CD8-positive, alpha-beta T cell (primary cell): ENCODE measurements at regions of chr10 and their contacts with region 1.

Region 1: DNA sequence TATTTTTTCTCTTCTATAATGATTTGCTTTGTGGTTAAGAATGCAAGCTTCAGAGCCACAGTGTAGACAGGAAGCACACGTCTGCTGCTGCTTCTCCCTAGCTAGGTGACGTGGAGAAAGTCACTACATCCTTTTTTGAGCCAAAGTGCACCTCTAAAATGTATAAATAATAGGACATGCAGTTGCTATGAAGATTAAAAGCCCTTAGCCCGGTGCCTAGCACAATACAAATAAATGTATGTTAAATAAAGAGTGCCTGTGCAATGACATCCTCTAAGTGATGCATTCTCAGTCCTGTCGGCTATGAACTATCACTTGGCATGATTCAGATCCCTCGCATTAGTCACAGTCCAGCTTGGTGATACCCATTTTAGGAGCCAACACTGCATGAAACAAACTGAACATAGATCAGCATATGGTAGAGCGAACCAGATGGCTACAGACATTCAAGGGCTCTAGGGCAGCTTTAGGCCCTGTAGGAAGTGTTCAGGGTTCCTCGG is 4.8 kb upstream of the TRDMT1 start:
- DNase-seq: peak in 6 of 9 experiments; percentile 11 to 85 (median 64)
- ATAC-seq: peak; percentile 70
- H3K4me3 ChIP-seq: no peak overlapping the region
- H3K4me3 Mint-ChIP-seq: peak overlapping the region; percentile 1
- H3K27ac ChIP-seq: peak overlapping the region; percentile 66 to 74
- H3K27ac Mint-ChIP-seq: peak overlapping the region; percentile 88
- H3K4me1 ChIP-seq: peaks cover 23% of the 10 kb centered on the region
- H3K4me1 Mint-ChIP-seq: peaks cover 25% of the 10 kb centered on the region
- H3K27me3 ChIP-seq: no peaks in the 10 kb centered on the region
- H3K27me3 Mint-ChIP-seq: no peaks in the 10 kb centered on the region
- CTCF ChIP-seq: no peak

Region 2: DNA sequence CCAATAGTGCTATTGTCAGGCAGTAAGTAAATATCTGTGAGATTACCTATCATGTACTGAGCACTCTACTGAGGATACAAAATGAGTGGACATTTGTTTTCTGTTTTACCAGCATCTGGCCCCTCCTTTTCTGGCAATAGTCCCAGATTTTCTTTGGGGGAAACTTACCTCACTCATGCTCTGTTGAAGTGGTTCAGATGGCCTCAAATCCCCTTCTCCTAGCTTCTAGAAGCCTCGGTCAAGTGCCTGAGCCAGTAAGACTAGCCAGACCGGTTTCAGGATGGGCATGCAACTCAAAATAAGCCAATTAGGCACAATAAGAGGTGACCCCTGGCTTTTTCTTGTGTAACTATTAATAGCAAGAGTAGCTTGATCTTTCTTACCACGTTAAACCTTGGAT is 24.5 kb before region 1 on chr10:
- CTCF ChIA-PET with region 1: no interaction called
- POLR2A ChIA-PET with region 1: no interaction called
- intact Hi-C with region 1: no loop called
- DNase-seq: no peak
- ATAC-seq: no peak
- H3K4me3 ChIP-seq: no peak overlapping the region
- H3K4me3 Mint-ChIP-seq: no peak overlapping the region
- H3K27ac ChIP-seq: no peak overlapping the region
- H3K27ac Mint-ChIP-seq: peak overlapping the region; percentile 27
- H3K4me1 ChIP-seq: no peaks in the 10 kb centered on the region
- H3K4me1 Mint-ChIP-seq: peaks cover 4% of the 10 kb centered on the region
- H3K27me3 ChIP-seq: no peaks in the 10 kb centered on the region
- H3K27me3 Mint-ChIP-seq: no peaks in the 10 kb centered on the region
- CTCF ChIP-seq: no peak

Region 3: DNA sequence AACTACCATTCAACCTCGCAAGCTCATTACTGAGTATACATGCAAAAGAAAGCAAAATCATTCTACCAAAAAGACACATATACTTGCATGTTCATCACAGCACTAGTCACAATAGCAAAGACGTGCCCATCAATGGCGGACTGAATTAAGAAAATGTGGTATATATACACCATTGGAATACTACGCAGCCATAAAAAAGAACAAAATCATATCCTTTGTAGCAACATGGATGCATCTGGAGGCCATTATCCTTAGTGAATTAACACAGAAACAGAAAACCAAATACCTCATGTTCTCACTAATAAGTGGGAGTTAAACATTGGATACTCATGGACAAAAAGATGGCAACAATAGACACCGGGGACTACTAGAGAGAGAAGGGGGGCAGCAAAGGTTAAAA is 11.2 kb before region 1 on chr10:
- CTCF ChIA-PET with region 1: interaction called, 6 read pairs
- POLR2A ChIA-PET with region 1: interaction called, 4 read pairs
- intact Hi-C with region 1: loop called in 1 of 2 experiments (anchors 2 kb)
- DNase-seq: no peak
- ATAC-seq: no peak
- H3K4me3 ChIP-seq: no peak overlapping the region
- H3K4me3 Mint-ChIP-seq: no peak overlapping the region
- H3K27ac ChIP-seq: no peak overlapping the region
- H3K27ac Mint-ChIP-seq: no peak overlapping the region
- H3K4me1 ChIP-seq: peaks cover 2% of the 10 kb centered on the region
- H3K4me1 Mint-ChIP-seq: peaks cover 23% of the 10 kb centered on the region
- H3K27me3 ChIP-seq: no peaks in the 10 kb centered on the region
- H3K27me3 Mint-ChIP-seq: no peaks in the 10 kb centered on the region
- CTCF ChIP-seq: no peak

Region 4: GRCh38 chr10:17216217-17216900 is 10.1 kb after region 1 on chr10:
- CTCF ChIA-PET with region 1: interaction called, 4 read pairs
- POLR2A ChIA-PET with region 1: interaction called, 4 read pairs
- intact Hi-C with region 1: loop called in 1 of 2 experiments (anchors 1 kb)
- DNase-seq: peak in 4 of 9 experiments; percentile 29 to 76 (median 49)
- ATAC-seq: peak; percentile 89
- H3K4me3 ChIP-seq: no peak overlapping the region
- H3K4me3 Mint-ChIP-seq: no peak overlapping the region
- H3K27ac ChIP-seq: peak overlapping the region; percentile 21 to 71
- H3K27ac Mint-ChIP-seq: peak overlapping the region; percentile 80
- H3K4me1 ChIP-seq: no peaks in the 10 kb centered on the region
- H3K4me1 Mint-ChIP-seq: peaks cover 11% of the 10 kb centered on the region
- H3K27me3 ChIP-seq: no peaks in the 10 kb centered on the region
- H3K27me3 Mint-ChIP-seq: no peaks in the 10 kb centered on the region
- CTCF ChIP-seq: no peak

Region 5: DNA sequence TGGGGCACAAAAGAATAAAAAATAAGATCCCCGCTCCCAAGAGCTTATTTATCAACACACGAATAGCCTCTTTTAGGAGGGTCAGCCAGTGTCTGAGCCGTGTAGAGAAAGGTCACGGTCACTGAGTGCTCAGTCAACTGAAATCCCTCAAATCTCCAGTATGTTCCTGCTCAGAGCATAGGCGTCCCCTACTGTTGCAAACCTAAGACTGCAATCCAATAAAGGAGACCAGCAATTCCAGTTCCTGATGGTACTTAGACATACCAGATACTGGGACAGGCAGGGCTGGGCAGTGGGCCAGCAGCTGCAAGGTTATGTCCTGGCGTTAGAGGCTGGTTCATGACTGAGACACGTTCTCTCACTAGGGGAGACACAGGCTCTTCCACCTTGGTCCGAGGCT is 1027.5 kb after region 1 on chr10:
- CTCF ChIA-PET with region 1: no interaction called
- POLR2A ChIA-PET with region 1: no interaction called
- intact Hi-C with region 1: no loop called
- DNase-seq: no peak
- ATAC-seq: no peak
- H3K4me3 ChIP-seq: no peak overlapping the region
- H3K4me3 Mint-ChIP-seq: no peak overlapping the region
- H3K27ac ChIP-seq: no peak overlapping the region
- H3K27ac Mint-ChIP-seq: no peak overlapping the region
- H3K4me1 ChIP-seq: no peaks in the 10 kb centered on the region
- H3K4me1 Mint-ChIP-seq: no peaks in the 10 kb centered on the region
- H3K27me3 ChIP-seq: no peaks in the 10 kb centered on the region
- H3K27me3 Mint-ChIP-seq: peaks cover 2% of the 10 kb centered on the region
- CTCF ChIP-seq: no peak